T-cell (primary cell): ENCODE measurements at regions of chr12 and their contacts with region 1.

Region 1: DNA sequence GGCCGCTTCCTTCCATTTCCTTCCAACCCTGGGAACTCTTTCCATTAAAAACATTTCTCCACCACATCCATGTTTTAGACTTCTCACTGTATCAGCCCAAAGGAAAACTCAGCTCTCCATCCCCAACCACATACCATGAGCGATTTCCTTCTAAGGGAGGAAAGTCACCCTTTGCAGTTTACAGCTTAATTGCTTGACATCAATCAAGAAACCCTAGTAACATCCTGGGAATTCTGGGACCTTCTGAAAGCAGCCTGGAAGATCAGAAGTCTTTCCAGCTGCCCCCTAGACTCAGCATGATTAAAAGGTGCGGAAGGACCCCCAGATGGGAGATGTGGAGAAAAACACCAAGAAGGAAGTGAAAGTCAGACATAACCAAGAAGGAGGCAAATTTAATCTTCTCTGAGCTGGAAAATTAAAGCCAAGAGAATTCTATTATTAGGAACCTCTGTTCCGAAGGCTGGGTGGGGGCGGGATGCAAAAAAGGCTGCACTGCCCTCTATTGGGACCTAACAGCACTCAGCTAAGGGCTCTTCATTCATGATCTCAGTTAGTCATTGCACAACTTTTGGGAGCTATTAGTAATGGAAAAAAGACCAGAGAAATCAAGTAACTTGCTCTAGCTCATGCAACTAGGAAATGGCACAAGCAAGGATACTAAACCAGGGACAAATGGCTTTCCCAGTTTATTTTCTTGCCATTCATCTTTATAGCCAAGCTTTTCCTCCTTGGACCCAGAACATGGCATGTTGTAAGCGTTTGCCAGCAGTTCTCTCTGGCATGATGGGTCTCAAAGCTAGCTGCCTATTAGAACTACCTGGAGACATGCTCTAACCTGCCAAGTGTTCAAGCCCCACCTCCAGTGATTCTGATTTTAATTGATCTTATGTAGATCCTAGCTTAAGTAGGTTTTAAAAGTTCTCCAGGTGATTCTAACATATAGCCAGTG is 73.1 kb upstream of the PLXNC1 start:
- DNase-seq: peak in 7 of 35 experiments; percentile 7 to 38 (median 8)
- ATAC-seq: no peak
- H3K4me3 ChIP-seq: no peak overlapping the region
- H3K4me3 Mint-ChIP-seq: no peak overlapping the region
- H3K27ac ChIP-seq: no peak overlapping the region
- H3K27ac Mint-ChIP-seq: no peak overlapping the region
- H3K4me1 ChIP-seq: peaks cover 6 to 10% of the 10 kb centered on the region in 2 experiments
- H3K4me1 Mint-ChIP-seq: peaks cover 20 to 29% (median 21%) of the 10 kb centered on the region in 3 donors
- H3K27me3 ChIP-seq: peaks cover 0 to 10% of the 10 kb centered on the region in 2 experiments
- H3K27me3 Mint-ChIP-seq: peaks cover 0 to 3% of the 10 kb centered on the region in 2 donors

Region 2: DNA sequence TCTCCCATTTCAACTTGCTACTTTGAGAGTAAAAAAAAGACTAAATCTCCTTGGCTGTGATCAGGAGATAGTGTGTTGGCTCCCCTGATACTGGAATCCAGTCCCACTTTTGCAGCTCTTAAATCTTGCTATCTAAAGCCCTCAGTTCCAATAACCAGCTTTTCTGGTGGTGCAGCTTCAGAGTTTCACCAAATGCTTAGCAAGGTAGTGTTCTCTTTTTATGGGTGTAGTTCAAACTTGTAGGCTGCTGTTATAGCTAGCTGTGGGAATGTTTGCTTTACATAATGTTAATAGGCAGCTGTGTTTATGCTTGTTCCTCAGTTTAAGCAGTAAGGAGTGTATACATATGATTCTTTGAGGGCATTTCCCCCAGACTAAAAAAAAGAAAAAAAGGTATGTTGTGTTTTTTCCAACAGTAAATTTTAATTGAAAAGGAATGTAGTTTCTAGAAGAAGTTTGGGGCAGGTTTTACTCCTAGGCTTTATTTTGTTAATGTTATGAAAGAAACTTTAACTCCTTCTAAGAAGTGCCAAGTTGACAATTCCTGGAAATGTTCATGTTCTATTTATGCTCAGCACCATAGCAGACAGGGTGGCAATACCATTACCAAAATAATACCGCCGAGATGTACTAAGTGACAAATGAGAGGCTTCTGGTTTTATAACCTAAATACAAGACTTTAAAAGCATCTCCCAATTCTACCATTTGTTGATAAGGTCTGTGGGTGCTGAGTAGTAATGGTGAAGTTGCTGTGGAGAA is 386.0 kb before region 1 on chr12:
- CTCF ChIA-PET with region 1: interaction called in 1 of 2 experiments, 15 read pairs
- POLR2A ChIA-PET with region 1: no interaction called
- DNase-seq: no peak
- ATAC-seq: peak in 1 of 4 experiments; percentile 29
- H3K4me3 ChIP-seq: no peak overlapping the region
- H3K4me3 Mint-ChIP-seq: peak overlapping the region in 1 of 3 donors; percentile 15
- H3K27ac ChIP-seq: no peak overlapping the region
- H3K27ac Mint-ChIP-seq: peak overlapping the region in 1 of 2 donors; percentile 73
- H3K4me1 ChIP-seq: peaks cover 0 to 6% of the 10 kb centered on the region in 2 experiments
- H3K4me1 Mint-ChIP-seq: peaks cover 15 to 39% (median 36%) of the 10 kb centered on the region in 3 donors
- H3K27me3 ChIP-seq: no peaks in the 10 kb centered on the region
- H3K27me3 Mint-ChIP-seq: no peaks in the 10 kb centered on the region

Region 3: GRCh38 chr12:93766796-93767523 is 308.3 kb before region 1 on chr12:
- CTCF ChIA-PET with region 1: interaction called, 6 to 13 read pairs
- POLR2A ChIA-PET with region 1: no interaction called
- DNase-seq: peak in 18 of 35 experiments; percentile 6 to 60 (median 27)
- ATAC-seq: peak; percentile 66 to 93 (median 76)
- H3K4me3 ChIP-seq: no peak overlapping the region
- H3K4me3 Mint-ChIP-seq: peak overlapping the region in 1 of 3 donors; percentile 0
- H3K27ac ChIP-seq: peak overlapping the region; percentile 36
- H3K27ac Mint-ChIP-seq: peak overlapping the region; percentile 1 to 41
- H3K4me1 ChIP-seq: peaks cover 0 to 15% of the 10 kb centered on the region in 2 experiments
- H3K4me1 Mint-ChIP-seq: peaks cover 26 to 51% (median 35%) of the 10 kb centered on the region in 3 donors
- H3K27me3 ChIP-seq: no peaks in the 10 kb centered on the region
- H3K27me3 Mint-ChIP-seq: no peaks in the 10 kb centered on the region

Region 4: GRCh38 chr12:94092516-94093241 is 17.4 kb after region 1 on chr12:
- CTCF ChIA-PET with region 1: no interaction called
- POLR2A ChIA-PET with region 1: no interaction called
- DNase-seq: no peak
- ATAC-seq: no peak
- H3K4me3 ChIP-seq: no peak overlapping the region
- H3K4me3 Mint-ChIP-seq: no peak overlapping the region
- H3K27ac ChIP-seq: no peak overlapping the region
- H3K27ac Mint-ChIP-seq: no peak overlapping the region
- H3K4me1 ChIP-seq: no peaks in the 10 kb centered on the region
- H3K4me1 Mint-ChIP-seq: no peaks in the 10 kb centered on the region
- H3K27me3 ChIP-seq: peaks cover 0 to 2% of the 10 kb centered on the region in 2 experiments
- H3K27me3 Mint-ChIP-seq: peaks cover 0 to 3% of the 10 kb centered on the region in 2 donors